ENCODE measurements at regions of chr6 and their contacts with region 1.

Region 1: DNA sequence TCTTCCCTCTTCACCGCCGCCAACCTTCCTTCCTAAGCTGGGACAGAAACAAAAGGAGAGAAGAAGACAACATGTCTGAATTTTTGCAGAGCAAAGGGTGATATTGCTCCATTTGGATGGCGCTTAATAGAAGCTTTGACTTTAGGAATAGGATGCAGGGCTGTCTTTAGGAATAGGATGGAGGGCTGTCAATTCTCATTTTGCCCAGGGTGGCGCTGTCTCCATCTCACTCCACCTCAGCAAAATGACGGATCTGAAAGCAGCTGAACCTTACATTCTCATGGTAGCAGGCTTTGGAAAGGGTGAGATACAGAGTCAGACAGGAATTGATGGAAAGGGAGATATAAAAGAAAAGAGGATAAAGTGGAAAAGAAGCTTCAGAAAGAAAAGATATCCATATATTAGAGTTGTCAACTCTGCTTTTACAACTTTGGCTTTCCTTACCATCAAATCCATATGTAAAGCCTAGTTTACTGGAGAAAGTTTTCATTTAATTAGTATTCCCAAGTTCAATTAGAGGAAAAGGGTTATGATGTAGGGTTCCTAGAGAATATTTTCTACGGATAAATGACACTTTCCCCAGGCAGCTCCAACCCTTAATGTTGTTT is 2.4 kb downstream of the MTCL3 start:
- DNase-seq: peak; percentile 86
- H3K4me3 Mint-ChIP-seq: peak overlapping the region; percentile 85
- H3K27ac Mint-ChIP-seq: peak overlapping the region; percentile 35
- H3K4me1 Mint-ChIP-seq: peaks cover 34% of the 10 kb centered on the region
- H3K27me3 Mint-ChIP-seq: peaks cover 24% of the 10 kb centered on the region

Region 2: DNA sequence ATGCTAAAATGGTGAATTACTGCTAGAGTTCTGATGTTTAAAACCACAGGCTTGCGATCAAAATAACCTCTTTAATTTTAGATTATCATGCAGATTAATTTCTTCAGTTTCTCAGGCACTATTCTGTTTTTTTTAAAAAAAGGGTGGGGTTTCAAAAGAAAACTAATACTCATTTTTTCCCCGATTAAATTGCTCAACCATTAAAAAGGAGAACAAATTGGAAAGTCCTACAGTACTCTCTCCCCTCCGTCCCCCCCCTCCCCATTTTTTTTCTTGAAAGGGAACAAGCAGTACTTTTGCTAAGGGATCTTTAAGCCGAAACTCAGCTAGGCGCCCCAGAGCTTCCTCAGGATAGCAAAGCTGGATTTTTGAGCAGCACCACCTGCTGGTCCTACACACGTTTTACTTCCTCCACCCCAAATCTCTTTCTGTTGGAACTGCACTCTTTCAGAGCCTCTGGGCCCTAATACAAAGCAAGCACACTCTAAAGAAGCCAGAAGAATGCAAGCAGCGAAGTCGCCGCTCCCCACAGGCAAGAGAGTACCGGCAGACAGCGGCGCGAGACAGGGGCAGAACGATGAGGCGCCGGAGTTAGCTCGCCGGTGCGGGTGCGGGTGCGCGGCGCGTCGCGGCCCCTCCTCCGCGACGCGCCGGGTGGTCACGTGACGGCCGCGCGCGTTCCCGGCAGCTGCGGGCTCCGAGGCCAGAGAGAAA is 250.4 kb before region 1 on chr6 and contains the start of gene RNF146:
- intact Hi-C with region 1: loop called (anchors 2 kb)
- DNase-seq: peak; percentile 92
- H3K4me3 Mint-ChIP-seq: peak within 1 kb of the TSS; percentile 91
- H3K27ac Mint-ChIP-seq: peak within 1 kb of the TSS; percentile 99
- H3K4me1 Mint-ChIP-seq: peaks cover 29% of the 10 kb centered on the region
- H3K27me3 Mint-ChIP-seq: peaks cover 30% of the 10 kb centered on the region
- total RNA-seq, gene RNF146: 16.7 and 18.4 TPM in 2 replicates

Region 3: GRCh38 chr6:127342946-127343808 is 173.6 kb before region 1 on chr6 and contains the start of gene ECHDC1:
- intact Hi-C with region 1: loop called (anchors 1 kb)
- DNase-seq: peak; percentile 91
- H3K4me3 Mint-ChIP-seq: no peak within 1 kb of the TSS
- H3K27ac Mint-ChIP-seq: no peak within 1 kb of the TSS
- H3K4me1 Mint-ChIP-seq: peaks cover 18% of the 10 kb centered on the region
- H3K27me3 Mint-ChIP-seq: no peaks in the 10 kb centered on the region
- total RNA-seq, gene ECHDC1: 60.2 and 63.1 TPM in 2 replicates

Region 4: DNA sequence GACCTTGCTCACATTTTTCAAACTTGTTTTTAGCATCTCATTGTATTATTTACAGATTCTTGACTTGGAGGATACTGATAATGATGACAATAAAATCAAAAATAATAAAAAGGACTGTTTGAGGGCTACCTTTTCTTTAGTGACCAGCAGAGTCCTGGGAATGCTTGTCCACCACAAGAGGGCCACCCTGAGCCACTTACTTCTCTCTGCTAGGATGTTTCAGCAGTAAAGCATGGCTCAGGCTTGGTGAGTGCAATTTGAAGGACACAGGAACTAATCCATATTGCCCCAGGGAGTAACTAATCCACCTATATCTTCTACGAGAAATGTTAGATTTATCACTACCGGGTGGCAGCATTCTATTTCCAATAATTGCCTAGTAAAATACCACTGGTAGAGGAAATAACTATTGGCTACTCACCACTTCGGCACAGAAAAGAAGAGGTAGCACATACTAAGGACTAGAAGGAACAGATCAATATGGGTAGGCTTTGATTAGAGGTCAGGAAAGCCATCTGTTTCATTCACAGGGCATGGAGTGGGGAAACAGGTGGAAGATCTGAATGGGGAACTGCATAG is 51.8 kb before region 1 on chr6:
- intact Hi-C with region 1: loop called (anchors 1 kb)
- DNase-seq: peak; percentile 88
- H3K4me3 Mint-ChIP-seq: no peak overlapping the region
- H3K27ac Mint-ChIP-seq: no peak overlapping the region
- H3K4me1 Mint-ChIP-seq: peaks cover 8% of the 10 kb centered on the region
- H3K27me3 Mint-ChIP-seq: no peaks in the 10 kb centered on the region

Region 5: GRCh38 chr6:127496471-127496870 is 20.3 kb before region 1 on chr6:
- intact Hi-C with region 1: no loop called
- DNase-seq: no peak
- H3K4me3 Mint-ChIP-seq: no peak overlapping the region
- H3K27ac Mint-ChIP-seq: no peak overlapping the region
- H3K4me1 Mint-ChIP-seq: peaks cover 12% of the 10 kb centered on the region
- H3K27me3 Mint-ChIP-seq: no peaks in the 10 kb centered on the region

Region 6: DNA sequence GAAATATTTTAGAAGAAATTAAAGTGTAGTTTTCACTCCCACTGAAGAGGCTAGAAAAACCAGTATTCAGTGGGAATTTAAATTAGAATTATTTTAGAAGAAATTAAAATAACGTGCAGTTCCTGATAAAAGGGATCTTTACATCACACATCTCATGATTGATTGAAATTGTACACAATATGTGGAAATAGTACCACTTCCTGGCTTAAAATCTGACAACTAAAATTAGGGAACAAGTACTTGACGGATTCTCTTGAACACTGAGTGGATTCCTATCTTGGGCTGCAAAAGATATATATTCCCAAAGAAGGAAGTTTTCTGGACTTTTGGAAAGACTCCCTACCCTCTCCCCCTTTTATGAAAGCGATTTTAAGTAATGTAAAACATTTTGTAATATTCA is 17.0 kb after region 1 on chr6:
- intact Hi-C with region 1: loop called (anchors 2 kb)
- DNase-seq: no peak
- H3K4me3 Mint-ChIP-seq: no peak overlapping the region
- H3K27ac Mint-ChIP-seq: no peak overlapping the region
- H3K4me1 Mint-ChIP-seq: no peaks in the 10 kb centered on the region
- H3K27me3 Mint-ChIP-seq: peaks cover 39% of the 10 kb centered on the region

Region 7: GRCh38 chr6:127893541-127893940 is 376.8 kb after region 1 on chr6:
- intact Hi-C with region 1: loop called (anchors 10 kb)
- DNase-seq: no peak
- H3K4me3 Mint-ChIP-seq: peak overlapping the region; percentile 85
- H3K27ac Mint-ChIP-seq: peak overlapping the region; percentile 91
- H3K4me1 Mint-ChIP-seq: peaks cover 39% of the 10 kb centered on the region
- H3K27me3 Mint-ChIP-seq: no peaks in the 10 kb centered on the region